Calu3 (cell line): ENCODE measurements at regions of chr6 and their contacts with region 1.

Region 1: GRCh38 chr6:44096612-44097011 is 30.6 kb downstream of the MRPL14 start:
- DNase-seq: peak; percentile 90
- H3K4me3 Mint-ChIP-seq: no peak overlapping the region
- H3K27ac Mint-ChIP-seq: no peak overlapping the region
- H3K4me1 Mint-ChIP-seq: peaks cover 35% of the 10 kb centered on the region
- H3K27me3 Mint-ChIP-seq: no peaks in the 10 kb centered on the region
- CTCF ChIP-seq: peak; percentile 96

Region 2: GRCh38 chr6:43823879-43824702 is 272.5 kb before region 1 on chr6:
- CTCF ChIA-PET with region 1: no interaction called
- intact Hi-C with region 1: no loop called
- DNase-seq: peak; percentile 64
- H3K4me3 Mint-ChIP-seq: peak overlapping the region; percentile 34
- H3K27ac Mint-ChIP-seq: no peak overlapping the region
- H3K4me1 Mint-ChIP-seq: peaks cover 45% of the 10 kb centered on the region
- H3K27me3 Mint-ChIP-seq: peaks cover 10% of the 10 kb centered on the region
- CTCF ChIP-seq: no peak

Region 3: DNA sequence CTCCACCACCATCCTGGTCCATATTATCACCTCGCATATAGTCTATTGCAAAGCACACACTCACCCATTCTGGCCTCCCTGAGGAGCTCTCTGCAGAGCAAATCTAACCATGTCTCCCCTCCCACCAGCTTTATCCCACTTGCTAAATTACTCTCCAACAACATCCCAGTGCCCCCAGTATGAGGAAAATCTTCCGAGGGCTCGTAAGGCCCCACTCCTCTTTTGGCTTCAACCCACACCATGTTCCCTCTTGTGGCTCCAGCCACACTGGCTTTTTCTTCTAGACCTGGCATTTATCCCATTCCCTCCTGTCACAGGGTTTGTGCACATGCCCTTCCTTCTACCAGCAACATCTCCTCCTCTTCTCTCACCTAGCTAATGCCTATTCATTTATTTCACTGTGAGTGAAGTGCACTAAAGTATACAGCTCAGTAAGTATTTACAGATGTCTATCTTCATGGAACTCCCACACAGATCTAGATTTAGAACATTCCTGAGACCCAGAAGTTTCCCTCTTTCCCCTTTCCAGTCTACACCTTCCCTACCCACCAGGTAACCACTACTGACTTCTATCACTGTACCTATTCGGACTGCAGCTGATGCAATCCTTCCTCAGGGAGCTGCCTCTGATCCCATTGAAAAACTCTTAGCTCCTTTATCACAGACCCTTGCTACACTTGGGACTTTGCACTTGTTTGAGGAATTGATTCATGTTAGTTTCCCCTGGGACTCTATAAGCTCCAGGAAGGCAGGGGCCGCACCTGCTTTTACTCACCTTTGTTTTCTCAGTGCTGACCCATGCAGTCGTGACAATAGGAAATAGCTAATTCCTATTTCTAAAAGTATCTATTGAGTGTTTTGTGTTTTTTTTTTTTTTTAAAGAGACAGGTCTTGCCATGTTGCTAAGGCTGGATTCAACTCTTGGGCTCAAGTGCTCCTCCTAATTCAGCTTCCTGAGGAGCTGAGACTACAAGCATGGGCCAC is 15.1 kb after region 1 on chr6:
- CTCF ChIA-PET with region 1: interaction called, 12 read pairs
- intact Hi-C with region 1: no loop called
- DNase-seq: peak; percentile 44
- H3K4me3 Mint-ChIP-seq: peak overlapping the region; percentile 21
- H3K27ac Mint-ChIP-seq: peak overlapping the region; percentile 83
- H3K4me1 Mint-ChIP-seq: peaks cover 47% of the 10 kb centered on the region
- H3K27me3 Mint-ChIP-seq: no peaks in the 10 kb centered on the region
- CTCF ChIP-seq: no peak

Region 4: GRCh38 chr6:44133003-44133931 is 36.7 kb after region 1 on chr6:
- CTCF ChIA-PET with region 1: interaction called, 6 read pairs
- intact Hi-C with region 1: loop called (anchors 1 kb)
- DNase-seq: peak; percentile 77
- H3K4me3 Mint-ChIP-seq: peak overlapping the region; percentile 5
- H3K27ac Mint-ChIP-seq: peak overlapping the region; percentile 27
- H3K4me1 Mint-ChIP-seq: peaks cover 46% of the 10 kb centered on the region
- H3K27me3 Mint-ChIP-seq: no peaks in the 10 kb centered on the region
- CTCF ChIP-seq: no peak

Region 5: GRCh38 chr6:44151348-44152108 is 54.9 kb after region 1 on chr6:
- CTCF ChIA-PET with region 1: interaction called, 10 read pairs
- intact Hi-C with region 1: loop called (anchors 1 kb)
- DNase-seq: peak; percentile 92
- H3K4me3 Mint-ChIP-seq: no peak overlapping the region
- H3K27ac Mint-ChIP-seq: no peak overlapping the region
- H3K4me1 Mint-ChIP-seq: peaks cover 6% of the 10 kb centered on the region
- H3K27me3 Mint-ChIP-seq: no peaks in the 10 kb centered on the region
- CTCF ChIP-seq: peak; percentile 100

Region 6: GRCh38 chr6:44237813-44238433 is 141.3 kb after region 1 on chr6:
- CTCF ChIA-PET with region 1: interaction called, 10 read pairs
- intact Hi-C with region 1: loop called (anchors 5 kb)
- DNase-seq: peak; percentile 95
- H3K4me3 Mint-ChIP-seq: peak overlapping the region; percentile 83
- H3K27ac Mint-ChIP-seq: peak overlapping the region; percentile 91
- H3K4me1 Mint-ChIP-seq: peaks cover 41% of the 10 kb centered on the region
- H3K27me3 Mint-ChIP-seq: no peaks in the 10 kb centered on the region
- CTCF ChIP-seq: peak; percentile 99

Region 7: GRCh38 chr6:44338228-44339122 is 241.9 kb after region 1 on chr6:
- CTCF ChIA-PET with region 1: interaction called, 3 read pairs
- intact Hi-C with region 1: loop called (anchors 1 kb)
- DNase-seq: peak; percentile 77
- H3K4me3 Mint-ChIP-seq: no peak overlapping the region
- H3K27ac Mint-ChIP-seq: no peak overlapping the region
- H3K4me1 Mint-ChIP-seq: no peaks in the 10 kb centered on the region
- H3K27me3 Mint-ChIP-seq: peaks cover 65% of the 10 kb centered on the region
- CTCF ChIP-seq: peak; percentile 84